ENCODE measurements at regions of chr3 and their contacts with region 1.

Region 1: GRCh38 chr3:129893581-129894070 is at the start of gene TMCC1:
- DNase-seq: peak; percentile 72 to 96 (median 90)
- ATAC-seq: peak; percentile 94
- H3K4me3 ChIP-seq: peak within 1 kb of the TSS; percentile 91 to 97
- H3K4me3 Mint-ChIP-seq: peak within 1 kb of the TSS; percentile 90
- H3K27ac ChIP-seq: peak within 1 kb of the TSS; percentile 91 to 93
- H3K27ac Mint-ChIP-seq: peak within 1 kb of the TSS; percentile 93
- H3K4me1 ChIP-seq: peaks cover 39% of the 10 kb centered on the region
- H3K4me1 Mint-ChIP-seq: peaks cover 43% of the 10 kb centered on the region
- H3K27me3 ChIP-seq: no peaks in the 10 kb centered on the region
- H3K27me3 Mint-ChIP-seq: no peaks in the 10 kb centered on the region
- CTCF ChIP-seq: no peak
- total RNA-seq, gene TMCC1: 30.0 to 33.1 TPM

Region 2: GRCh38 chr3:129278439-129278970 is 615.1 kb before region 1 on chr3 and contains the start of gene HMCES:
- CTCF ChIA-PET with region 1: no interaction called
- POLR2A ChIA-PET with region 1: no interaction called
- intact Hi-C with region 1: loop called in 1 of 2 experiments (anchors 1 kb)
- DNase-seq: peak; percentile 88 to 98 (median 96)
- ATAC-seq: peak; percentile 94
- H3K4me3 ChIP-seq: peak within 1 kb of the TSS; percentile 59 to 92
- H3K4me3 Mint-ChIP-seq: peak within 1 kb of the TSS; percentile 95
- H3K27ac ChIP-seq: peak within 1 kb of the TSS; percentile 88 to 93
- H3K27ac Mint-ChIP-seq: peak within 1 kb of the TSS; percentile 97
- H3K4me1 ChIP-seq: peaks cover 39% of the 10 kb centered on the region
- H3K4me1 Mint-ChIP-seq: peaks cover 42% of the 10 kb centered on the region
- H3K27me3 ChIP-seq: no peaks in the 10 kb centered on the region
- H3K27me3 Mint-ChIP-seq: no peaks in the 10 kb centered on the region
- CTCF ChIP-seq: no peak
- total RNA-seq, gene HMCES: 69.5 to 78.7 TPM

Region 3: GRCh38 chr3:129690406-129690805 is 203.2 kb before region 1 on chr3:
- CTCF ChIA-PET with region 1: no interaction called
- POLR2A ChIA-PET with region 1: no interaction called
- intact Hi-C with region 1: loop called (anchors 5 kb)
- DNase-seq: peak in 7 of 9 experiments; percentile 2 to 79 (median 20)
- ATAC-seq: peak; percentile 96
- H3K4me3 ChIP-seq: no peak overlapping the region
- H3K4me3 Mint-ChIP-seq: no peak overlapping the region
- H3K27ac ChIP-seq: no peak overlapping the region
- H3K27ac Mint-ChIP-seq: no peak overlapping the region
- H3K4me1 ChIP-seq: no peaks in the 10 kb centered on the region
- H3K4me1 Mint-ChIP-seq: peaks cover 8% of the 10 kb centered on the region
- H3K27me3 ChIP-seq: no peaks in the 10 kb centered on the region
- H3K27me3 Mint-ChIP-seq: no peaks in the 10 kb centered on the region
- CTCF ChIP-seq: no peak

Region 4: DNA sequence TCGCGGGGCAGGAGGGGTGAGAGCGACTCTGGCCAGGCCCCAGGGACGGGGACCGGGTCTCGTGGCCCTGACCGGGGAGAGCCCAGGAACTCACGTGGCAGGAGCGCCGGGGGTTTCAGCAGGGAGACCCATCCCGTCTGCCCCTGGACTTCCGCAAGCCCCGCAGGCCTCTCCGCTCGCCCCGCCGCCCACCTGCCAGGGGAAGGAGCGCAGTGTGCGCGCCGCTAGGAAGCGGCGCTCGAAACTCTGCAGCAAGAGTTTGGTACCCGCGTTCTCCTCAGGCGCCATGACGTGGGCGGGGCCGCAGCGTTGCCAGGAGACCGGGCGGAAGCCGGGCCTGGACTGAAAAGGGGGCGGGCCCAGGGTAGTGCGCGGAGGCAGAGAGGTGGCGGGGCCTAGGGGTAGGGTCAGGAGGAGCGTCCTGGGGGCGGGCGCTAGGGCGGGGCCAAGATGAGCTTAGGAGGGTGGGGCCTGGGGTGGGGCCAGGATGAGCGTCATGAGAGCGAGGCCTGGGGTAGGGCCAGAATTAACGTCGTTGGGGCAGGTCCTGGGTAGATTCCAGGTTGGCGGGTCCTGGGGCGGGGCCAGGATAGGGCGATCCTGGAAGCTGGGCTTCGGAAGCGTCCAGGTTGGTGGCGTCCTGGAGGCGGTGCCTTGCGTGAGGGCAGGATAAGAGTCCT is 217.7 kb after region 1 on chr3:
- CTCF ChIA-PET with region 1: no interaction called
- POLR2A ChIA-PET with region 1: interaction called, 3 read pairs
- intact Hi-C with region 1: loop called in 1 of 2 experiments (anchors 2 kb)
- DNase-seq: peak; percentile 97 to 100 (median 99)
- ATAC-seq: peak; percentile 100
- H3K4me3 ChIP-seq: peak overlapping the region; percentile 69 to 89
- H3K4me3 Mint-ChIP-seq: peak overlapping the region; percentile 99
- H3K27ac ChIP-seq: peak overlapping the region; percentile 82 to 95
- H3K27ac Mint-ChIP-seq: peak overlapping the region; percentile 100
- H3K4me1 ChIP-seq: peaks cover 3% of the 10 kb centered on the region
- H3K4me1 Mint-ChIP-seq: peaks cover 28% of the 10 kb centered on the region
- H3K27me3 ChIP-seq: no peaks in the 10 kb centered on the region
- H3K27me3 Mint-ChIP-seq: no peaks in the 10 kb centered on the region
- CTCF ChIP-seq: no peak

Region 5: GRCh38 chr3:131494706-131495105 is 1601.1 kb after region 1 on chr3:
- CTCF ChIA-PET with region 1: no interaction called
- POLR2A ChIA-PET with region 1: no interaction called
- intact Hi-C with region 1: loop called in 1 of 2 experiments (anchors 5 kb)
- DNase-seq: no peak
- ATAC-seq: no peak
- H3K4me3 ChIP-seq: no peak overlapping the region
- H3K4me3 Mint-ChIP-seq: no peak overlapping the region
- H3K27ac ChIP-seq: no peak overlapping the region
- H3K27ac Mint-ChIP-seq: no peak overlapping the region
- H3K4me1 ChIP-seq: no peaks in the 10 kb centered on the region
- H3K4me1 Mint-ChIP-seq: peaks cover 23% of the 10 kb centered on the region
- H3K27me3 ChIP-seq: no peaks in the 10 kb centered on the region
- H3K27me3 Mint-ChIP-seq: no peaks in the 10 kb centered on the region
- CTCF ChIP-seq: no peak

Measured in CD8-positive, alpha-beta T cell (primary cell).